Activated naive CD4-positive, alpha-beta T cell treated with anti-CD3 and anti-CD28 coated beads for 36 hours (primary cell): ENCODE measurements at regions of chr6 and their contacts with region 1.

Region 1: GRCh38 chr6:45377554-45378333 is at the start of gene SUPT3H:
- DNase-seq: peak; percentile 91
- H3K4me3 Mint-ChIP-seq: peak within 1 kb of the TSS; percentile 92
- H3K27ac Mint-ChIP-seq: peak within 1 kb of the TSS; percentile 99
- H3K4me1 Mint-ChIP-seq: peaks cover 16% of the 10 kb centered on the region
- H3K27me3 Mint-ChIP-seq: no peaks in the 10 kb centered on the region
- total RNA-seq, gene SUPT3H: 15.7 to 17.9 TPM

Region 2: GRCh38 chr6:44593539-44593944 is 784.2 kb before region 1 on chr6:
- CTCF ChIA-PET with region 1: no interaction called
- intact Hi-C with region 1: loop called (anchors 5 kb)
- DNase-seq: peak; percentile 78
- H3K4me3 Mint-ChIP-seq: no peak overlapping the region
- H3K27ac Mint-ChIP-seq: no peak overlapping the region
- H3K4me1 Mint-ChIP-seq: peaks cover 3% of the 10 kb centered on the region
- H3K27me3 Mint-ChIP-seq: peaks cover 4% of the 10 kb centered on the region

Region 3: DNA sequence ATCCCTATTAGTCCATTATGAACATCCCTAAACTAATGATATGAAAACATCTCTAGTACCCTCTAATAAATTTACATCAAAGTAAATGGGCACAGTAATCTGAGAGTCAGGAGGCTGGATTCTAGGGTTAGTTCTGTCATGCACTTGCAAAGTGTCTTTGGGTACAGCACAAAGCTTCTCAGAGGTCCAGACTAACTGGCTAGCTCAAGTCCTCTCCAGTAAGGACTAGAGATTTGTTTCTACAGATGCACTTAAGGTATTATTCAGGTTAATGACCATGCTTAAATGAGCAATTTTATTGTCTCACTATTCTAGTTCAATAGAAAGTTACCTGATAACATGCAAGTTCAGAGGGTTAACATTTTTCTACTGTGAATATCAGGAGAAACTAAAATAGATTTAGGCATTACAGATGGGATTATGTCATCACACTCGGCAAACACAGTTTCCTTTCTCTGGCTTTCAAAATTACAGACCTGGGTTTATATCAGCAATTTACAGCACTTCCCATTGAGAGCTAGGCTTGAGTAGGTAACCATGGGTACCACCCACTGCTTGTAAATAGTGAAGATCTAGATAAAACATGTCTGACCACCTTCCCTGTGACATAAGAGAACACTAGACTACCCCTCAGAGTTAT is 452.5 kb before region 1 on chr6:
- CTCF ChIA-PET with region 1: no interaction called
- intact Hi-C with region 1: loop called (anchors 2 kb)
- DNase-seq: peak; percentile 36
- H3K4me3 Mint-ChIP-seq: peak overlapping the region; percentile 0
- H3K27ac Mint-ChIP-seq: peak overlapping the region; percentile 16
- H3K4me1 Mint-ChIP-seq: peaks cover 53% of the 10 kb centered on the region
- H3K27me3 Mint-ChIP-seq: no peaks in the 10 kb centered on the region

Region 4: DNA sequence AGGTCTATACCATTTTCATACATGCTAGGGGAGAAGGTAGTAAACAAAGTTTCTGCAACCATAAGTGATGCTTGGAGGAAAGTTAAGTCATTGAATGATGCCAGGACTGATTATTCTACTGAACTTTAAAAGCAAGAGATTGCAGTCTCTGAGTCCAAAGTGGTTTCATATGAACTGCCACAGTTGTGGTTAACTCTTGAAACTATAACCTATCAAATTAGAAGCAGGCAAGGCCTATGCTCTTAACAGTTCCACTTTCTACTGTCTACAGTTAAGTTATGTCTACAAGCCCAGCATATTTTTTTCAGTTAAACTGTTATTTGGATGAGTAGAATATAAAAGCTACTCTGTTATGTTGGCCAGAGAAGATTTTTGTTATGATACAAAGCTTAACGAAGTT is 376.1 kb before region 1 on chr6:
- CTCF ChIA-PET with region 1: no interaction called
- intact Hi-C with region 1: loop called (anchors 10 kb)
- DNase-seq: no peak
- H3K4me3 Mint-ChIP-seq: no peak overlapping the region
- H3K27ac Mint-ChIP-seq: no peak overlapping the region
- H3K4me1 Mint-ChIP-seq: peaks cover 19% of the 10 kb centered on the region
- H3K27me3 Mint-ChIP-seq: no peaks in the 10 kb centered on the region

Region 5: DNA sequence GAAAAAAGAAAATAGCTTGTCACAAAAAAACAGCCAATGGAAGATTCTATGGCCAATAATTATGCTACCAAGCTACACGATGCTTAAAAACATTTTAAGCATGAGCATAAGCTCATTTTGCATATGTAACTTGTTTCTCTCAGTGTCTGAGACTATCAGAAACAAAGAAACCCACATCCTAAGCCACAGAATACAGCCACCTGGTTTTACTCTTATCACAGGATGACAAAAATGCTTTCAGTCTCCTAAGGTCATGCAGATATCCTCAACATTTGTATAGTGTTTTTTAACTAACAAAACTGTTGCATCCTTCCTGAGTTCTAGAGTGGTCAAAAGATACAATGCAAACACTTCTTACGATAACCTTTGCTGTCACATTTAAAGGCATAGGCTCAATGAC is 221.7 kb before region 1 on chr6:
- CTCF ChIA-PET with region 1: no interaction called
- intact Hi-C with region 1: loop called (anchors 2 kb)
- DNase-seq: peak; percentile 54
- H3K4me3 Mint-ChIP-seq: no peak overlapping the region
- H3K27ac Mint-ChIP-seq: peak overlapping the region; percentile 59
- H3K4me1 Mint-ChIP-seq: peaks cover 28% of the 10 kb centered on the region
- H3K27me3 Mint-ChIP-seq: no peaks in the 10 kb centered on the region

Region 6: DNA sequence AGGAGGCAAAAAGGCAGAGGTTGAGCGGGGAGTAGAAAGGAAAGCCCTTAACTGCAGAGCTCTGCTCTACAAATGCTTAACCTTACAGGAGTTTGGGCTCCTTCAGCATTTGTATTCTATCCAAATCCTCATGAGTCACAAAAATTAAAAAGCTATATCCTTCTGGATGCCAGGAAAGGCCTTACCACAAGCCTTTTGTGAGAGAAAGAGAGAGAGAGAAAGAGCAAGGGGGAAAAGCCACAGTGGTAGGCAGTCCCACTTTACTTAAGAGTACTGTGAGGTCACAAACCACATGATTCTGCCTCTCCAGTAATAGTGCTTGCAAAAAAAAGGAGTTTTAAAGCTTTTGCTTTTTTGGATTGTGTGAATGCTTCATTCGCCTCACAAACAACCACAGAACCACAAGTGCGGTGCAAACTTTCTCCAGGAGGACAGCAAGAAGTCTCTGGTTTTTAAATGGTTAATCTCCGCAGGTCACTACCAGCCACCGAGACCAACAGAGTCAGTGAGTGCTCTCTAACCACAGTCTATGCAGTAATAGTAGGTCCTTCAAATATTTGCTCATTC is 49.7 kb before region 1 on chr6 and contains the start of gene RUNX2:
- CTCF ChIA-PET with region 1: interaction called, 3 read pairs
- intact Hi-C with region 1: loop called (anchors 2 kb)
- DNase-seq: peak; percentile 34
- H3K4me3 Mint-ChIP-seq: peak within 1 kb of the TSS; percentile 72
- H3K27ac Mint-ChIP-seq: peak within 1 kb of the TSS; percentile 50
- H3K4me1 Mint-ChIP-seq: peaks cover 56% of the 10 kb centered on the region
- H3K27me3 Mint-ChIP-seq: no peaks in the 10 kb centered on the region
- total RNA-seq, gene RUNX2: 3.1 to 3.6 TPM

Region 7: GRCh38 chr6:46011241-46012085 is 633.7 kb after region 1 on chr6:
- CTCF ChIA-PET with region 1: no interaction called
- intact Hi-C with region 1: loop called (anchors 1 kb)
- DNase-seq: peak; percentile 78
- H3K4me3 Mint-ChIP-seq: no peak overlapping the region
- H3K27ac Mint-ChIP-seq: peak overlapping the region; percentile 72
- H3K4me1 Mint-ChIP-seq: peaks cover 45% of the 10 kb centered on the region
- H3K27me3 Mint-ChIP-seq: peaks cover 6% of the 10 kb centered on the region